ENCODE measurements at regions of chr6 and their contacts with region 1.

Region 1: DNA sequence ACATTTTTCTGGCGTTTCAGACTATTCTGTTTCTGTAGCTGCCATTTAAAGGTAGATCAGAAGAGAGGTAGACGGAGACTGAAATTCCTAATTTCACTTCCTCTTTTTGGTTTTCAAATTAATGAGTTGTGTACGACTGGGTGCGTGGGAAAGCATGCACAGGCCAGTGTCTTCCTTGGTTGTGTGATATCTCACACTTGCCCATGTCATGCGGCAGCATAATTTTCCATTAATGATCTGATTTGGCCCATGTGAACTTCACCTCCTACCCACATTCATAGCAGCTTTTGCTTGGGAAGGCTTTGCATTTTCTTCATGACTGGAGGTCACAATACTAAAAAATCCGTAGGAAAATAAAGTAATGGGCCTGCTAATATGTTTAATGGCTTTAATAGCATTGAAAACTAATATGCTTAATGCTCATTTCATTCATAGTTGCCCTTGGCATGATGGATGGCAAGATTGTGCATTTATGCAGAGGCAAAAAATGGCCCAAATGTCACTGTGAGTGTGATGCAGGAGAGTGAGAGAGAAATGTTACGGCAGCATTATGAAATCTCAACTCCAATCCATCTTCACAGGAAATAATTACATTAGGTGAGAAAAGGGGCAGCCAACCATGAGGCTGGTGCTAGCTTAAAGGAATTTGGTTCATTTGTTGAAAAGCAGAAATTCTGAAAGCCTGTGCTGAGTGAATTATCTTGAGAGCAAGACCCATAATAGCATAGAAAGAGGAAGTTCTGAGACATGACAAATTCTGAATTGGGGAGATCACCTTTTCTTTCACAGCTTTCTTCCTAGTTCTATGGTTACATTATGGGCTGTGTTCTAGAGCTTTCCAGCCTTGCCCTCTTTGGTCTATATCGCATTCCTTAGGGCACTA is 69.0 kb upstream of the UST start:
- DNase-seq: peak; percentile 82
- ATAC-seq: peak; percentile 90
- H3K4me3 ChIP-seq: no peak overlapping the region
- H3K27ac ChIP-seq: peak overlapping the region; percentile 75
- H3K4me1 ChIP-seq: peaks cover 20% of the 10 kb centered on the region
- H3K27me3 ChIP-seq: no peaks in the 10 kb centered on the region
- CTCF ChIP-seq: no peak
- EP300 ChIP-seq: peak; percentile 74 to 90; a peak in 3 of 4 replicates
- POLR2A ChIP-seq: no peak
- RAD21 ChIP-seq: no peak

Region 2: GRCh38 chr6:148620579-148621298 is 57.1 kb before region 1 on chr6:
- CTCF ChIA-PET with region 1: interaction called, 5 read pairs
- POLR2A ChIA-PET with region 1: no interaction called
- RAD21 ChIA-PET with region 1: no interaction called
- SMC1A ChIA-PET with region 1: interaction called, 3 read pairs
- in situ Hi-C with region 1: no loop called
- intact Hi-C with region 1: loop called (anchors 2 kb)
- DNase-seq: peak; percentile 21
- ATAC-seq: peak; percentile 95
- H3K4me3 ChIP-seq: no peak overlapping the region
- H3K27ac ChIP-seq: no peak overlapping the region
- H3K4me1 ChIP-seq: peaks cover 20% of the 10 kb centered on the region
- H3K27me3 ChIP-seq: no peaks in the 10 kb centered on the region
- CTCF ChIP-seq: no peak
- EP300 ChIP-seq: peak; percentile 58 to 68; a peak in 3 of 4 replicates
- POLR2A ChIP-seq: no peak
- RAD21 ChIP-seq: no peak

Region 3: GRCh38 chr6:148693882-148694484 is 16.1 kb after region 1 on chr6:
- CTCF ChIA-PET with region 1: interaction called, 3 read pairs
- POLR2A ChIA-PET with region 1: interaction called, 7 read pairs
- RAD21 ChIA-PET with region 1: interaction called, 7 read pairs
- SMC1A ChIA-PET with region 1: interaction called, 14 read pairs
- in situ Hi-C with region 1: no loop called
- intact Hi-C with region 1: no loop called
- DNase-seq: no peak
- ATAC-seq: peak; percentile 89
- H3K4me3 ChIP-seq: no peak overlapping the region
- H3K27ac ChIP-seq: peak overlapping the region; percentile 30; the same call in 1 of the 2 replicates
- H3K4me1 ChIP-seq: peaks cover 6% of the 10 kb centered on the region; the same call in 1 of the 2 replicates
- H3K27me3 ChIP-seq: no peaks in the 10 kb centered on the region
- CTCF ChIP-seq: no peak
- EP300 ChIP-seq: no peak
- POLR2A ChIP-seq: no peak
- RAD21 ChIP-seq: no peak

Region 4: DNA sequence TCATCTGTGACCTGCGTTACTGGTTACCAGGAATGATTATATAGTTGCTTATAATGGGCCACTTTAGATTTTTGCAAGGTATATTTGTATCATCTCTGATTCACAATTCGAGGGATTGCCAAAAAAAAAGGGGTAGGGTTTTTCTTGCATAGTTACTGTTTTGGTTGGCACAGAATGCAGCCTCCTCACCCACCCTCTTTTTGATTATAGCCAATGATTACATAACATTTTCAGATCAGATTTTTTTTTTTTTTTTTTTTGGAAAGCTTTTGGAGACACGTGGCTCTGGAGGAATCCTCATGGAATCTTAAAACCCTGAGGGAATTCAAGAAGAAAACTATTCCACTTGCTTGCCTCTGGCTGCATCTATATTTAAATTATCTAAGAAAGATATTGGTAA is 122.7 kb after region 1 on chr6:
- CTCF ChIA-PET with region 1: no interaction called
- POLR2A ChIA-PET with region 1: no interaction called
- RAD21 ChIA-PET with region 1: no interaction called
- SMC1A ChIA-PET with region 1: no interaction called
- in situ Hi-C with region 1: no loop called
- intact Hi-C with region 1: no loop called
- DNase-seq: no peak
- ATAC-seq: no peak
- H3K4me3 ChIP-seq: no peak overlapping the region
- H3K27ac ChIP-seq: no peak overlapping the region
- H3K4me1 ChIP-seq: no peaks in the 10 kb centered on the region
- H3K27me3 ChIP-seq: peaks cover 0 to 2% of the 10 kb centered on the region in 2 experiments; a peak in 1 of 4 replicates
- CTCF ChIP-seq: no peak
- EP300 ChIP-seq: no peak
- POLR2A ChIP-seq: no peak
- RAD21 ChIP-seq: no peak